Activated CD4-positive, alpha-beta T cell treated with anti-CD3 and anti-CD28 coated beads, Interleukin-2, amount 10 ng/mL, durations not matched to agents 24 days and 14 days (primary cell): ENCODE measurements at regions of chr11 and their contacts with region 1.

Region 1: DNA sequence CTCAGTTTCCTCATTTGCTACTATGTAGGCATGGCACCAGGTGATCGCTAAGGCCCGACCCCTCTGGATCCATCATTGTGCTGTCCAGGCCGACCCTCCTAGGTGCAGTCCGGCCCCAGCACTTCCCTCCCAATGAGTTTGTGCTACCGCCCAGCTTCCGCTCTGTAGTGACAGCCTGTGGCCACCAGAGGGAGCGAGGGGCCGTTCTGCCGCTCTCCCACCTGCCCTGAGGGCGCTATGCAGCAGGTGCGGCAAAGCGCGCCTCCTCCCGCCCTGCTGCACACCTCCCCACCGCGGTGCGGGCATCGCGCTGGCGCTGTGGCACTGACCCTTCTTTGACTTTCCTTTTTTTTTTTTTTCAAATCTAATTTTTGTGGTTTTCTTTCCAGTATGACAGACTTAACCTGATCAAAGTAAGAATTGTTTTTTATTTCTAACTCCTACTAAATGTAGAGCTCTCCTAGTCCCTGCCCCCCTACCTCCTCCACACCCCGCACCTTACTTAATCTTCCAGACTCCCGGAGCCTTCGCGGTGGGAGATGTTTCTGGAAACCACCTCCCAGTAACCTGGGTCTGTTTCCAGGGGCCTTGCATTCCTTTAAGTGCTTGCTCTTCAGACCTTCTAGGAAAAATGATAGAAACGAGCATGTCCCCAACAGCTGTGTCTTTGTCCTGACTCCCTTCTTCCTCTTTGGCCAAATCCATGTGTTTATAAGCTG is 73.7 kb downstream of the SCN3B start:
- DNase-seq: peak; percentile 91
- H3K4me3 Mint-ChIP-seq: no peak overlapping the region
- H3K27ac Mint-ChIP-seq: peak overlapping the region; percentile 53
- H3K4me1 Mint-ChIP-seq: peaks cover 19% of the 10 kb centered on the region
- H3K27me3 Mint-ChIP-seq: no peaks in the 10 kb centered on the region

Region 2: GRCh38 chr11:123511037-123511870 is 69.5 kb before region 1 on chr11:
- intact Hi-C with region 1: loop called (anchors 2 kb)
- DNase-seq: peak; percentile 90
- H3K4me3 Mint-ChIP-seq: no peak overlapping the region
- H3K27ac Mint-ChIP-seq: peak overlapping the region; percentile 34
- H3K4me1 Mint-ChIP-seq: peaks cover 44% of the 10 kb centered on the region
- H3K27me3 Mint-ChIP-seq: no peaks in the 10 kb centered on the region

Region 3: DNA sequence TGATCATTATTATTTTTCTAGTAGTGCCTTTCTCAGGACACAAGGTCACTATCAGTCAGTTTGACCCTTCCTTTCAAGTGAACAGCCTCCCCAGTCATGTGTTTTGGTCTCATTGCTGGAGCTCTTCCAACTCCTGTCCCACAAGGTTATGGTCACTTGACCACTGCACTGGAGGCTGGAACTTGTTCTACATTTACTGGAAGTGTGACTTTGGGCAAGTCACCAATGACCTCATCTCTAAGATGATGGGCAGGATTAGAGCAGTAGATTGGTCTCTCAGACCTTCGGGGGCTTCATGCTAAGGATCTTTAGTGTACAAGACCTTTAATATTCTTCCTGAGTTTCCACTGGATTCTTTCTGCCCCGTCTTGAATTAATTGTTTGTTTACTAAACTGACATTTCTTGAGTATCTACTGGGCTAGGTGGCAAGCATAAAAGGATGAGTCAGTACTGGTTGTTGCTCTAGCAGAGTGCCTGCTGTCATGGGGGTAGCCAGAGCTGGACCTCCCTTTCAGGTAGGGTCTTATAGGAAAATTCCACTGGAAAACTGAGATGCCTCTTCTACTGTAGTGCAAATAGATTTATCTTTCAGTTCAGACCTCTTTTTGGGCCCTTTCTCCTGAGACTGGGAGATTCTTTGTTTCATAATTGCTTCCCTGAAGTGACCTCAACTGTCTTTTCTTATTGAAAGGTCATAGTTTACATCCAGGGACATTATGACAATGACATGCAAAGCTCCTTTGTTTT is 43.9 kb before region 1 on chr11:
- intact Hi-C with region 1: no loop called
- DNase-seq: no peak
- H3K4me3 Mint-ChIP-seq: no peak overlapping the region
- H3K27ac Mint-ChIP-seq: no peak overlapping the region
- H3K4me1 Mint-ChIP-seq: peaks cover 32% of the 10 kb centered on the region
- H3K27me3 Mint-ChIP-seq: no peaks in the 10 kb centered on the region

Region 4: GRCh38 chr11:123707606-123708205 is 127.0 kb after region 1 on chr11:
- intact Hi-C with region 1: loop called (anchors 1 kb)
- DNase-seq: peak; percentile 89
- H3K4me3 Mint-ChIP-seq: no peak overlapping the region
- H3K27ac Mint-ChIP-seq: no peak overlapping the region
- H3K4me1 Mint-ChIP-seq: peaks cover 2% of the 10 kb centered on the region
- H3K27me3 Mint-ChIP-seq: peaks cover 10% of the 10 kb centered on the region

Region 5: DNA sequence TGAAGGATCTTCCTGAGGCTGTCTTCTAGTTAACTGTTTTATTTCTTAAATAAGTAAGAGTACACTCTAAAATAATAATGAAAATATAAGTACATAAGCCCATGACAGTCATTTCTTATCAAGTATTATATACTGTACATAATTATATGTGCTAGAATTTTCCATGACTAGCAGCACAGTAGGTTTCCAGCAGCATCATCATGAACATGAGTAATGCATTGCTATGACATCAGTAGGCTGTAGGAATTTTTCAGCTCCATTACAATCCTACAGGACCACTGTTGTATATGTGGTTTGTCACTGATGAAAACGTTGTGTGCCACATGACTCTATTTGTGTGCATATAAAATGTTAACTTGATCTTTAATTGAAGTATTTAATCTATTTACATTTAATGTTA is 138.7 kb after region 1 on chr11:
- intact Hi-C with region 1: no loop called
- DNase-seq: no peak
- H3K4me3 Mint-ChIP-seq: no peak overlapping the region
- H3K27ac Mint-ChIP-seq: no peak overlapping the region
- H3K4me1 Mint-ChIP-seq: peaks cover 5% of the 10 kb centered on the region
- H3K27me3 Mint-ChIP-seq: peaks cover 22% of the 10 kb centered on the region